HEK293 (cell line): ENCODE measurements at regions of chr2 and their contacts with region 1.

Region 1: GRCh38 chr2:25664183-25664964 is 9.0 kb downstream of the DTNB start:
- H3K4me3 ChIP-seq: peak overlapping the region; percentile 2
- H3K27ac ChIP-seq: no peak overlapping the region
- H3K4me1 ChIP-seq: peaks cover 17% of the 10 kb centered on the region
- CTCF ChIP-seq: peak; percentile 67; the same call in 1 of the 2 replicates

Region 2: DNA sequence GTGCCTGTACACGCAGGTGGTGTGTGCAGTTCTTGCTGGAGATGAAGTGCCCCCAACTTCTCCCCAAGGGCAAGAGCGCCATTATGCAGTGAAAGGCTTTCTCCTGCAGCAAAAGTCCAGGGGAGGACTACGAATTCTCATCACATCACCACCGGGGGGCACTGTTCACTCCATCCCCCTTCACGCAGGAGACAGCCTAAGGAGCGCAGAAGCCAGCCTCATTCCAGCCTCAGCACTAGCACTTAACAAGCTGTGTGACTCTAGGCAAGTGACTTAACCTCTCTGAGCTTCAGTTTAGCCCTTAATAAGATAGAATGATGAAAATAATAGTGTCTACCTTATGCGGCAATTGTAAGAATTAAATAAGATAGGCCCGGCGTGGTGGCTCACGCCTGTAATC is 355.0 kb before region 1 on chr2:
- CTCF ChIA-PET with region 1: interaction called, 10 read pairs
- POLR2A ChIA-PET with region 1: no interaction called
- H3K4me3 ChIP-seq: no peak overlapping the region
- H3K27ac ChIP-seq: no peak overlapping the region
- H3K4me1 ChIP-seq: peaks cover 3% of the 10 kb centered on the region; the same call in 1 of the 2 replicates
- CTCF ChIP-seq: 0 out of 2 replicates have a peak, but pooled peaks have one; percentile 13

Region 3: GRCh38 chr2:25323042-25323514 is 341.3 kb before region 1 on chr2:
- CTCF ChIA-PET with region 1: no interaction called
- POLR2A ChIA-PET with region 1: no interaction called
- H3K4me3 ChIP-seq: no peak overlapping the region
- H3K27ac ChIP-seq: no peak overlapping the region
- H3K4me1 ChIP-seq: no peaks in the 10 kb centered on the region
- CTCF ChIP-seq: no peak

Region 4: DNA sequence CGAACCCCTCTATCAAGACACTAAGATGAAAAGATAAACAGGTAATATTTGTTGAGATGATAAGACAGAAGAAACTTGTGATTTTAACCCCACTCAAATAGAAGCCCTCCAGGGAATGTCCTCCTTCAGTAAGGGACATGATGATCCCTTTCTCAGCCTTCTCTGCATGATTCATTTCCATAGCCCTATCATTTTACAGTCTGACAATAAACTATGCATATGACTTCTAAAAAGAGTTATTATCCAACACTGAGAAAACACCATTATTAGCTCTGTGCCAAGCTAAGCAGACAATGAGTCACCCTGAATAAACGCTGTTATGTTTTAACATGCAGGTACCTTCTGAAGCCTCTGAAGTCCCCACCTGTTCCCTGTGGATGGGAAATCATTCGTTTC is 45.7 kb before region 1 on chr2:
- CTCF ChIA-PET with region 1: interaction called, 33 read pairs
- POLR2A ChIA-PET with region 1: no interaction called
- H3K4me3 ChIP-seq: no peak overlapping the region
- H3K27ac ChIP-seq: peak overlapping the region; percentile 50
- H3K4me1 ChIP-seq: peaks cover 26% of the 10 kb centered on the region
- CTCF ChIP-seq: no peak

Region 5: GRCh38 chr2:25684577-25685473 is 20.5 kb after region 1 on chr2:
- CTCF ChIA-PET with region 1: interaction called, 10 read pairs
- POLR2A ChIA-PET with region 1: no interaction called
- H3K4me3 ChIP-seq: no peak overlapping the region
- H3K27ac ChIP-seq: no peak overlapping the region
- H3K4me1 ChIP-seq: peaks cover 7% of the 10 kb centered on the region
- CTCF ChIP-seq: no peak

Region 6: DNA sequence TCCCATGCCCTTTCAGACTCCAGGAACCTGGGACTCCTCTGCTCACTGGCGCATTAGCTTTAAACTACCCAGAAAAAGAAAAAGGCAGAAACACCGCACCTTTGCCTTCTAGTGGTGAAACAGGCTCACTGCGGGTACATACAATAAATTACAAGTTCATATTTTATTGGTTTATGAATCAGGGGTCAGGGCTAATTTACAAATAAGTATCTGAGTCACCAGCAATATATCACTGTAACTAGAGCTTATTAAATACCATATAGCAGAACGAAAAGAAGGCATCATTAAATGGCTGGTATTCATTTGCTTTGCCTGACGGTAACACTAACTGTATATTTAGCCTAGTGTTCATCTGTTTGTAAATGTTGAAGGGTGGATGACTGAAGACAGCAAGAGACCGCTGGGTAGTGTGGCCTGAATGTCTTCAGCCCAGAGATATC is 35.9 kb after region 1 on chr2:
- CTCF ChIA-PET with region 1: interaction called, 25 read pairs
- POLR2A ChIA-PET with region 1: no interaction called
- H3K4me3 ChIP-seq: no peak overlapping the region
- H3K27ac ChIP-seq: no peak overlapping the region
- H3K4me1 ChIP-seq: peaks cover 12% of the 10 kb centered on the region
- CTCF ChIP-seq: no peak

Region 7: DNA sequence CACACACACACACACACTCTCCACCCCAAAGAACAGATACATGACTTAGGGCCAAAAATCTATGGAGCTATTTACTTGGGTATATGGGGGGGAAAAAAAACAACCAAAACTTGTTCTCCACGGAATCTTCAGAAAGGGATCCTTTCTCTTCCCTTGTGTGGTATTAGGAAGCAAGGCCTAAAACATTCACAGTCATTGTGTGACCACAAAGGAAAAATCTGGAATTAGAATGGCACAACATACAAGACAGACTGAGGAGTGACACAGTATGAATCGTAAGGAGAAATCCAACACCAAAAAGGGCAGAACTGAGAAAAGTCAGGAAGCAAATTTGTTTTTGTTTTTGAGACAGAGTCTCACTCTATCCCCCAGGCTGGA is 143.6 kb after region 1 on chr2:
- CTCF ChIA-PET with region 1: no interaction called
- POLR2A ChIA-PET with region 1: no interaction called
- H3K4me3 ChIP-seq: no peak overlapping the region
- H3K27ac ChIP-seq: no peak overlapping the region
- H3K4me1 ChIP-seq: no peaks in the 10 kb centered on the region
- CTCF ChIP-seq: no peak

Region 8: GRCh38 chr2:25960920-25961319 is 296.5 kb after region 1 on chr2:
- CTCF ChIA-PET with region 1: no interaction called
- POLR2A ChIA-PET with region 1: no interaction called
- H3K4me3 ChIP-seq: no peak overlapping the region
- H3K27ac ChIP-seq: no peak overlapping the region
- H3K4me1 ChIP-seq: no peaks in the 10 kb centered on the region
- CTCF ChIP-seq: no peak